H1 (cell line): ENCODE measurements at regions of chr5 and their contacts with region 1.

Region 1: DNA sequence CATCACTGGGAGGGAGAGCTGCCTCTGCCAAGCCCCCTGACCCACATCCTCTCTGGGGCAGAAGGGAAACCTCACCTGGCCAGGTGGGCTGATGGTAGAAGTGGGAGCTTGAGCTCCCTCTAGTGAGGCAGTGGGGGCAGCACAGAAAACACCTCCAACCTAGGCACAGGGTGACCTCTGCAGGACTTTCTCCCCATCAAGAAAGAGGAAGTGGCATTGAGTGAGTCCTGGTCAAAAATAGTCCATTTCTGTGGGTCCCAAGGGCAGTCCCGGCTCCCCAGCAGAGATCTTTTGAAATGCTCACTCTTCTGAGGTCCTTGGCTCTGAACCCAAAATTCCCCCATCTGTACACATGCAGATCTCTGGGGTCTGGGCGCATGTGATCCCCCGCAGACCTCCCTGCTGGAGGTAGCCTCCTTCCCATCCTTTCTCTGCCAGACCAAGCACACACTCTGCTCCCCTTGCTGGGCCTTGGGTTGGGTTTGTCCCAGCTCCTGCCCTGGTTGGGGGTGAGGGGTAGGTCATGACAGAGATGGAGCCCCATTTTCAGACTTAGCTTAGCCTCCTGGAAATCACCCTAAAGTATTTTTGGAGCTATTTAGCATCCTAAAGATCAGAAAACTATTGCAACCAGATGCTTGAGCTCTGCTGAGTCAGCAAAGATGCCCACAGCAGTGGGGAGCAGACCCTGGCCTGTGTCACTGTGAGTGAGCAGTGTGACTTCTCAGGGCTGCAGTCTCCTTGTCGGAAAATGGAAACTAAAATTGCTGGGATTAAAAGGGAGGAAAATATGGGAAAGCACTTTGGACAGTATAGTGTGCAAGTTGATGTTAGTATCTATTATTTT is 41.6 kb upstream of the LCP2 start:
- DNase-seq: peak in 1 of 2 experiments; percentile 72
- H3K4me3 ChIP-seq: no peak overlapping the region
- H3K27ac ChIP-seq: no peak overlapping the region
- H3K4me1 ChIP-seq: peaks cover 6 to 15% (median 11%) of the 10 kb centered on the region in 4 experiments; a peak in 6 of 7 replicates
- H3K27me3 ChIP-seq: no peaks in the 10 kb centered on the region
- CTCF ChIP-seq: peak; percentile 91 to 99 (median 92)
- EP300 ChIP-seq: no peak
- POLR2A ChIP-seq: no peak
- RAD21 ChIP-seq: peak; percentile 89 to 91

Region 2: DNA sequence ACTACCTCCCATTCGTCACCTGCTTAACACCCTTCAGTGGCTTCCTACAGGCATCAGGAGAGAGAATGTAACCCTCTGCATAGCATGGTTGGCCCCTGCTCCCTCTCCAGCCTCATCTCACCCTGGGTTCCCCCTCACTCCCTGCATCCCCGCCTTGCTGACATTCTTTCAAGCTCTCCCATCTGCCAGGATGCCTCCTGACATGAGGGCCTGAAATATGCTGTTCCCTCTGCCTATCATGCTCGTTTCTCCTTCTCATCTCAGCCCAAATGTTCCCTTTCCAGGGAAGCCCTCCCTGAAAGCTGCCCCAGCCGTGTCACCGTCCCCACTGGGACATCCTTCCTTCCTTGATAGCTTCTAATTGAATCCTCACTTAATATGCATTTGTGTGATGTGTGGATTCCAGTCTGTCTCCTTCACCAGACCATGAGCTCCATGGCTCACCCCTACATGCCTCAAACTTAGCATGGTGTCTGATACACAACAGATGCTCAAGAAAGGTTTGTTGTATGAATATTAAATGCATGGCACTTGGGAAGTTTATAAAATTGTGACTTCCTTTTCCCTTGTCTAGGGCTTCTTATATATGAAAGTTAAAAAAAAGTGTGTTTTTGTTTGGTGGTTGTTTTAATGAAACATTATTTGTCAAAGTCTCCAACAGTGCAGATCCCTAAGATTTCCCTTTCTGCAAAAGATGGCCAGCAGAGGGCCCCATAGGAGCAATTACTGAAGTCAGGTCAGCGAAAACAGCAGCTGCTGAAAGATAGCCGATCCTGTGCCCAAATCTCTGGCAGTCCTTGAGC is 113.6 kb before region 1 on chr5:
- CTCF ChIA-PET with region 1: interaction called, 50 read pairs
- POLR2A ChIA-PET with region 1: interaction called, 4 read pairs
- DNase-seq: peak in 1 of 2 experiments; percentile 84
- H3K4me3 ChIP-seq: no peak overlapping the region
- H3K27ac ChIP-seq: no peak overlapping the region
- H3K4me1 ChIP-seq: peaks cover 0 to 7% (median 2%) of the 10 kb centered on the region in 4 experiments; a peak in 4 of 7 replicates
- H3K27me3 ChIP-seq: peaks cover 0 to under 1% (median under 1%) of the 10 kb centered on the region in 4 experiments; a peak in 2 of 7 replicates
- CTCF ChIP-seq: peak; percentile 29 to 85 (median 65)
- EP300 ChIP-seq: no peak
- POLR2A ChIP-seq: no peak
- RAD21 ChIP-seq: peak; percentile 95 to 96

Region 3: GRCh38 chr5:170262061-170263045 is 76.8 kb before region 1 on chr5:
- CTCF ChIA-PET with region 1: interaction called, 77 read pairs
- POLR2A ChIA-PET with region 1: no interaction called
- DNase-seq: peak in 1 of 2 experiments; percentile 41
- H3K4me3 ChIP-seq: no peak overlapping the region
- H3K27ac ChIP-seq: no peak overlapping the region
- H3K4me1 ChIP-seq: peaks cover 6 to 12% (median 8%) of the 10 kb centered on the region in 4 experiments; a peak in 4 of 7 replicates
- H3K27me3 ChIP-seq: no peaks in the 10 kb centered on the region
- CTCF ChIP-seq: no peak
- EP300 ChIP-seq: no peak
- POLR2A ChIP-seq: no peak
- RAD21 ChIP-seq: no peak

Region 4: GRCh38 chr5:170287532-170287931 is 51.6 kb before region 1 on chr5:
- CTCF ChIA-PET with region 1: interaction called, 14 read pairs
- POLR2A ChIA-PET with region 1: interaction called, 4 read pairs
- DNase-seq: no peak
- H3K4me3 ChIP-seq: no peak overlapping the region
- H3K27ac ChIP-seq: no peak overlapping the region
- H3K4me1 ChIP-seq: peaks cover 2 to 7% (median 3%) of the 10 kb centered on the region in 4 experiments; a peak in 4 of 7 replicates
- H3K27me3 ChIP-seq: no peaks in the 10 kb centered on the region
- CTCF ChIP-seq: no peak
- EP300 ChIP-seq: no peak
- POLR2A ChIP-seq: no peak
- RAD21 ChIP-seq: no peak

Region 5: DNA sequence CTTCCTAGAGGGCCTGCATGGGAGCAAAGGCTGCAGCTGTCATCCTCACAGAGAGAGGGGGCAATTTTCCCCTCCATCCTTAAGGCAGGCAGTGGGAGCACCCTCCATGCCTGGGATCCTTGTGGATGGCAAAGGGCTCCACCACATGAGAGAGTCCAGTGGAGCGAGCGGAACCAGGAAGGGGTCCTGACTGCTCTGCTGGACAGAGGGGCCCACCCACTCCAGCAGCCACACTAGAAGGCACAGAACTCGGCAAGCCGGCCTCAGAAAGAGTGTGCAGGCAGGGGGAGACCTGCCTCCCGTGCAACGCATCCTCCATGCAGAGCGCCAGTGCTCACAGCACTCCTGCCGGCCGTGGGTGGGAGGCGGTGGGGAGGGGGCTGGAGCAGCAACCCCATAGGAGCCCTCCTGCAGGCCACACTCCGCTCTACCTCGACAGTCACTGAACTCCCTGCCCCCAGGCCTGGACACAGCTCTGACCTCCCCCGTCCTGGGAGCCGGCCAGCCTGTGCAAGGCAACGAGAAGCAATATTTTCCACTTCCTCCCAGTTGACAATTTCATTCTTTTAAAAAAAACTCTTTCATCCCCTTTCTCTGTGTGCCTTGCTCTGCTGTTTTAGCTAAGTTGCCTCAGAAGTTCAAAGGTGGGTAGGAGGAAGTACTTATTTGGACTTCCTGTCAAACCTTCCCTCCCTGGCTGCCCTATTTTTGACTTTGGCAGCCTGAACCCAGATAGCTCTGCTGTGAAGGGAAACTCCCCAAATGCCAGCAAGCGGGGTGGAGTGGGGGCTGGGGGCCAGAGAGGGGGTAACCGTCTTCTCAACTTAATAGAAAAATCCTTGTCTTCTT is 36.3 kb before region 1 on chr5:
- CTCF ChIA-PET with region 1: interaction called, 15 read pairs
- POLR2A ChIA-PET with region 1: no interaction called
- DNase-seq: no peak
- H3K4me3 ChIP-seq: no peak overlapping the region
- H3K27ac ChIP-seq: no peak overlapping the region
- H3K4me1 ChIP-seq: peaks cover 0 to 5% (median 2%) of the 10 kb centered on the region in 4 experiments; a peak in 2 of 7 replicates
- H3K27me3 ChIP-seq: no peaks in the 10 kb centered on the region; a peak in 1 of 7 replicates
- CTCF ChIP-seq: peak; percentile 7 to 32 (median 27); a peak in 3 of 4 replicates
- EP300 ChIP-seq: no peak
- POLR2A ChIP-seq: no peak
- RAD21 ChIP-seq: peak in 1 of 2 experiments; percentile 19; a peak in 1 of 4 replicates

Region 6: GRCh38 chr5:170372971-170373370 is 33.8 kb after region 1 on chr5:
- CTCF ChIA-PET with region 1: interaction called, 10 read pairs
- POLR2A ChIA-PET with region 1: no interaction called
- DNase-seq: no peak
- H3K4me3 ChIP-seq: no peak overlapping the region
- H3K27ac ChIP-seq: no peak overlapping the region
- H3K4me1 ChIP-seq: no peaks in the 10 kb centered on the region
- H3K27me3 ChIP-seq: no peaks in the 10 kb centered on the region
- CTCF ChIP-seq: no peak
- EP300 ChIP-seq: no peak
- POLR2A ChIP-seq: no peak
- RAD21 ChIP-seq: no peak

Region 7: DNA sequence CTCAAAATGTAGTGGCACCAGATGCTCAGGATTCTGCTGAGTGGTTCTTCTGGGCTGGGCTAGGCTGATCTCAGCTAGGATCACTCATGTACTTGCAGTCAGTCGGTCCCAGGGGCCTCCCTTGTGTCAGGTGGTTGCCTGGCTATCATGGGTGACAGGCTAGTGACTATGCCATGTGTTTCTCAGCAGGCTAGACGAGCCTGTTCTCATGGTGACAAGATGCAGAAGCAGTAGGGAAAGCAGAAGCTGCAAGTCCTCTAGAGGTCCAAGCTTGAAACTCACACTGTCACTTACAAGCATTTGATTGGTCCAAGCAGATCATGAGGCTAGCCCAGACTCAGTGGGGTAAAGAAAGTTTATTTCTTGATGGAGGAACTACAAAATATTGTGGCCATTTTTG is 65.2 kb after region 1 on chr5:
- CTCF ChIA-PET with region 1: interaction called, 20 read pairs
- POLR2A ChIA-PET with region 1: no interaction called
- DNase-seq: no peak
- H3K4me3 ChIP-seq: no peak overlapping the region
- H3K27ac ChIP-seq: no peak overlapping the region
- H3K4me1 ChIP-seq: peaks cover 9 to 15% (median 13%) of the 10 kb centered on the region in 4 experiments; a peak in 6 of 7 replicates
- H3K27me3 ChIP-seq: no peaks in the 10 kb centered on the region
- CTCF ChIP-seq: no peak
- EP300 ChIP-seq: no peak
- POLR2A ChIP-seq: no peak
- RAD21 ChIP-seq: no peak